ENCODE measurements at regions of chr14 and their contacts with region 1.

Region 1: DNA sequence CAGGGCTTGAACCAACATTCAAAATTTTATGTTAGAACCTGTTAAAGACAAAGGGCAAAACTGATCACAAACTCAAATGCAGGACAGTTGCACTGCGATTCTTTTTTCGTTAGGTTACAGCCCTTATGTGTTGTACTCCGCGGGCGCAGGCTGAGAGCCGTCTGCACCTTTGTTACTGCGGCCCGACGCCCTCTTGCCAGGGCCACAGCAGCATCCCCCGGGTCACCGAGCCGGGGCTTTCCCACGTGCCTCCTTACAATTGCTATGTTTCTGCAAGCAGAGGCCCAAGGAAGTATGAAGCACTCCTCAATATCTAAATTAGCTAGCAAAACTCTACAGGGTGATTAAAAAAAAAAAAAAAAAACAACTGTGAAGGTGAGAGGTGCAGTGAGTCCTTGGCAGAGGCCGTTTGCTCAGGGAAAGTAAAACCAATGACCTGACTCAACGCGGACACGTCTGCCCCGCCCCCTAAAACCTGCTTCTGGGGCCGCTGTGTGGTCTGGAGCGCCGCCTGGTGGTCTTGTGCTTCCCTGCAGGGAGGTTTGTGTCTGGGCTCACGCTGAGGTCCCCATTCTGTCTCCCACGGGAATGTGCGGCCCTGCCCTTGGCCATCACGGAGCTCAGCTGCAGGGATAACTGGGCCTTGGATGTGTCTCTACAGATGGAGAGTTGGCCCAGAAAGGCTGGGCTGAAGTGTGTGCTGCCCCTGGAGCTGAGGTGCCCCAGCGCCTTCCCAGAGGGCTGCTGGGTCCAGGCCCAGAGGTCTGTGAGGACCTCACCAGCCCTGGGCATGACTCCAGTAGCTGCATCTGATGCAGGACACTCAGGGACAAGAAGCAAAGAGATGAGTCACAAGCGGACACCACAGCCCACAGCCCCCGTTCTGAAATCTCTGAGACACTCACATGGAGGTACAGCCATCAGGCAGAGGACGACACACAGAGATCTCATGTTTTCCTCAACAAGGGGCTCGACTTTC is 418.5 kb downstream of the TMEM121 start:
- DNase-seq: peak; percentile 78 to 83 (median 79)
- H3K4me3 ChIP-seq: peak overlapping the region in 1 of 7 experiments; percentile 5
- H3K27ac ChIP-seq: no peak overlapping the region
- H3K4me1 ChIP-seq: peaks cover 0 to 18% (median 13%) of the 10 kb centered on the region in 4 experiments
- H3K27me3 ChIP-seq: no peaks in the 10 kb centered on the region

Region 2: DNA sequence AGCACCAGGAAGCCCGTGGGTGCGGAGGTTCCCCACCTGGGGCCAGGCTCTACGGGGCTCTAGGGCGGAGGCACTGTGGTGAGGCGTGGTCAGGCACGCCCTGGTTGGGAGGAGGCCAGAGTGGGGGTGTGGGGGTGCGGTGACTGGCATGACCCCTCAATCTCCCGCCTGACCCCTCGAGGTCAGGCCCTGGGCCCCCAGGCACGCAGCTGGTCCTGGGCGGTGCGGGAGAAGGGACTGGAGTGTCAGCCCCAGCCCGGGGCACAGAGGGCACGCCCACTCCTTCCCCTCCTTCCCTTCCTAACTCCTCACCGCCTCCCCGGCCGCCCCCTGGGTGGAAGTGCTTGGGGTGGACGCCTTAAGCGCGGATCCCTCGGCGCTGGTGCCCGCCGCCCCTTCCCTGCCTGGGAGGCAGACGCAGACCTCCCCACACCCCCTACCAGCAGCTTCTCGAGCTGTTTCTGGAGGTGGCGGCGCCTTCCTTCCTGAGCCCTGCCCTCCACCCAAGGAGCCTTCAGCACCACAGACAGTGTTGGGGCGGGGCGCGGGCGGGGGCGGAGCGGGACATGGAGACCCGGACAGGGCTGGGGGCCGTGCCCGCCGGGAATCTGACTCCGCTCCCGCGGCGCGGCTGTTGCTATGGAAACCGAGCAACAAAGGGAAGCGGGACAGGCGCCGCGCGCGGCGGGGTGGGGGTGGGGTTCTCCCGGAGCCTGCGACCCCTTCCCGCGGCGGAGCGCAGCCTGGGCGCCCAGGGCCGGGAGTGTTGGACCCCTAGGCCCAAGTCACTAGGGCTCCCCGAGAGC is 471.0 kb before region 1 on chr14:
- CTCF ChIA-PET with region 1: no interaction called
- POLR2A ChIA-PET with region 1: no interaction called
- DNase-seq: peak; percentile 69 to 90 (median 77)
- H3K4me3 ChIP-seq: peak overlapping the region; percentile 32 to 78 (median 60)
- H3K27ac ChIP-seq: peak overlapping the region in 1 of 2 experiments; percentile 43
- H3K4me1 ChIP-seq: peaks cover 0 to 56% (median 34%) of the 10 kb centered on the region in 4 experiments
- H3K27me3 ChIP-seq: peaks cover 0 to 49% (median 17%) of the 10 kb centered on the region in 5 experiments

Region 3: DNA sequence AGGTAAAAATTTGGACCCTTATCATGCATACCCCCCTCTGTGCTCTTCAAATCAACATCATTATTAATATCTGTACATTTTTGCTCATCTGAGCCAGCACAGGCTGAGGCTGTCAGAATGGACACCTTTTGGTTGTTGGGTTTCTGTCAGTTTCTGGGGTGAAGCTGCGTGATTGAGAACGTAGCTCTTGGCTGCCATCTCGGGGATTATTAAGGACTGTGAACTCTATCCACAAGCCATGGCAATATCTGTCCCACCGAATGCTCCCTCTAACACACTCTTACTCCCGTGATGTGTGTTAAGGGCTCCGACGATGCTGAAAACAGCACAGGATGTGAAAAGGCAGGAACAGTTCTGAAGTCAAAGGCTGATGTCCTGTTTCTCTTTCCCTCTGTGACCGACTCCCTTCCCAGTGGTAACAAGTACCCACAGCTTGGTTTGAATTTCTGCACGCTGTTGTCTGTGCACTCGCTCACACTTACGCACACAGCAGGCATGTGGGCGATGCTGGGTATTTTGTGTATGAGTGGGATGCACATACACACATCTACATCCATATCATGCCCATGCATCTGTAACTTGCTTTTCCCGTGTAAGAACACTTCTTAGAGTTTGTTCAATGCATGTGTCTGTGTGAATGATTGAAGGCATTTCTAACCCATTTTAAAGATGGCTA is 13.0 kb before region 1 on chr14:
- CTCF ChIA-PET with region 1: interaction called, 47 read pairs
- POLR2A ChIA-PET with region 1: no interaction called
- DNase-seq: peak in 2 of 3 donors; percentile 65 to 75
- H3K4me3 ChIP-seq: no peak overlapping the region
- H3K27ac ChIP-seq: no peak overlapping the region
- H3K4me1 ChIP-seq: peaks cover 0 to 40% (median 17%) of the 10 kb centered on the region in 4 experiments
- H3K27me3 ChIP-seq: peaks cover 0 to 6% (median 0%) of the 10 kb centered on the region in 5 experiments